Mammary epithelial cell (primary cell): ENCODE measurements at regions of chr2 and their contacts with region 1.

Region 1: DNA sequence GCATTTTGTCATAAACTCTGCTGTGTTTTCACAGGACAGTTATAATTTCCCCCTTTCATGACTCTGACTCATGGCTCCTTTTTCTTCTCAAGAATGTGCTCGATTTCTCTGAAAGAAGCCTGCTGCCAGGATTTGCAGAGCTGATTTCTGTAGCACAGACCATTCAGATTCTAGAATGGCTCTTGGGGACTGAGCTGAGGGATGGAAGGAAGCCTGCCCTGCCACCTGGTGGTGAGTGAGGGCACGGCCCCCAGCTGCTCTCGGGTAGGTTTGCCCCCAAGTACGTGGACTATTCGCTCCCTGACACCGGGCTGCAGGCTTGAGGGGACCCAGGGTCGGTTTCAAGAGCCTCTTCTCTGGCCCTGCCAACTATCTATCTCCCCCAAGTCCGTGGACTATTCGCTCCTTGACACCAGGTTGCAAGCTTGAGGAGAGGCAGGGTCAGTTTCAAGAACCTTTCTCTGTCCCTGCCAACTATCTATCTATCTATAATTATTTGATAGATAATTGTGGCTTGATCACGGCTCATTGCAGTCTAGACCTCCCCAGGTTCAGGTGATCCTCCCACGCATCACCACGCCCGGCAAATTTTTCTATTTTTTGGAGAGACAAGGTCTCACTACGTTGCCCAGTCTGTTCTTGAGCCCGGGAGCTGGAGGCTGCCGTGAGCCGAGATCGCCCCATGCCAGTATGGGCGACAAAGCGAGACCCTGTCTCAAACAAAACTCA is 1.4 kb upstream of the SMYD5 start:
- DNase-seq: peak; percentile 44
- H3K4me3 ChIP-seq: no peak overlapping the region
- H3K27ac ChIP-seq: no peak overlapping the region
- H3K4me1 ChIP-seq: peaks cover 13% of the 10 kb centered on the region
- H3K27me3 ChIP-seq: no peaks in the 10 kb centered on the region
- CTCF ChIP-seq: peak; percentile 93 to 94

Region 2: DNA sequence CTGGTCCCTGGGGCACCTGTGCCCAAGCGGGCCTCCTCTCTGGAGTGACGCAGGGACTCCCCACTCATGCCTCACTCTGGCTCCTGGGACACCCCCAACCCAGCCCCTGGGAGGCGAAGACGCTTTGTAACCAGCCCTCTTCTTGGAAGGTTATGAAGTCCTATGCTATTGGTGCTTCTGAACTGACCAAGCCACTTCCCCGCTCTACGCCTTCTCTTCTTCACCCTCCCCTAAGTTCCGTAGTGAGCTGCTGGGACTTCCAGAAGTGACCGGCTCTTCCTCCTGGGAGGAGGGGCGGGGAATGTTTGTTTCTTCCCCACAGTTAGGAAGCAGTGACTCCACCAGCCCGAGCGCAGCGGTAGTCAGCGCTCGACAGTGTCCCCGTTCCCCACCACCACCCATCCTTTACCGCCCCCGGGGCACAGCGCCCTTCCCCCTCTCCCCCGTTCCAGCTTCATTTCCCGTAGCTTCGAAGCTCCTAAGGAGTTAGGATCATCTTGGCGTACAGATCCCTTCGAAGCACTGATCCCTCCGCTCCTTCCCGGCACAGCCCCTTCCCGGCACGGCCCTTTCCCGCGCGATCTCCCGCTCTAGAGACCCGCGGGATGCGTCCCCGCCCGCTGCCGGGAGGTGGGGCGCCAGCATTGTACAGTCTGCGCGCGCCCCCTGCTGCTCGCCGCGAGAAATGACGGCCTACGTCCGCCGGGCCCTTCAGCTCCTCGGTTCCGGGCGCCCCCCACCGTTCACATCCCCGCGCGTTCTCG is 35.5 kb before region 1 on chr2:
- CTCF ChIA-PET with region 1: interaction called, 46 read pairs
- dilution Hi-C with region 1: no loop called
- in situ Hi-C with region 1: no loop called
- intact Hi-C with region 1: loop called (anchors 1 kb)
- DNase-seq: peak; percentile 64
- H3K4me3 ChIP-seq: peak overlapping the region; percentile 55 to 59 (median 55)
- H3K27ac ChIP-seq: no peak overlapping the region
- H3K4me1 ChIP-seq: peaks cover 27% of the 10 kb centered on the region
- H3K27me3 ChIP-seq: peaks cover 13% of the 10 kb centered on the region
- CTCF ChIP-seq: peak; percentile 64 to 93

Region 3: DNA sequence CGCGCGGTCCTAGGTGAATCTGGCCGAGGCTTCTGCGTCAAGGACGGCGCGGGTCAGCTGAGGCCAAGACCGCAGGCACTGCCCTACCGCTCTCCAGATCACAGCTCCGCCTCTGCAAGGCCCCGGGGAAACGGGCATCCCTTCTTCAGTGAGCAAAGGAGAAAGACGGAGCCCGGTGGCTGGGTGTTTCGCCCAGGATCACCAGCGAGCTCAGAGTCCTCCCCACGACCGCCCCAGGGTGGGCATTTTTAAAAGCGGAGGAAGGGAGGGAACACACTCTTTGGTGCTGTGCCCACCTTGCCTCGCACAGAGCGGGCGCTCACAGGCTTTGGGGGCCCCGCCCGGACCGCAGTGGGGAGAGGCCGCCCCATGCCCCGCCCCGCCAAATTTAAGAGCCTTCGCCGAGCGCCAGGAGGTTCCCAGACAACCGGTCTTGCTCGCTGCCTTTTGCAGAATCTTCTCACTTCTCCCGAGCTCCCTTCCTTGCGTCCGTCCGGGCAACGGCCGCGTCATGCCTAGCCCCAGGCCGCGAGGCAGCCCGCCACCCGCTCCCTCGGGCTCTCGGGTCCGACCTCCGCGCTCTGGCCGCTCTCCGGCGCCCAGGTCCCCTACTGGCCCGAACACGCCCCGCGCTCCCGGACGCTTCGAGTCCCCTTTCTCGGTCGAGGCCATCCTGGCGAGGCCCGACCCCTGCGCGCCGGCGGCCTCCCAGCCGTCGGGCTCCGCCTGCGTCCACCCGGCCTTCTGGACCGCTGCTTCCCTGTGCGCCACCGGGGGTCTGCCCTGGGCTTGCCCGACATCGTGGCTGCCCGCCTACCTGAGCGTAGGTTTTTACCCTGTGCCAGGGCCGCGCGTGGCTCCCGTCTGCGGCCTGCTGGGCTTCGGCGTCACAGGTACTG is 10.2 kb before region 1 on chr2 and contains the start of gene NOTO:
- CTCF ChIA-PET with region 1: no interaction called
- dilution Hi-C with region 1: no loop called
- in situ Hi-C with region 1: no loop called
- intact Hi-C with region 1: loop called (anchors 1 kb)
- DNase-seq: peak; percentile 12
- H3K4me3 ChIP-seq: peak within 1 kb of the TSS; percentile 15 to 27 (median 26)
- H3K27ac ChIP-seq: no peak within 1 kb of the TSS
- H3K4me1 ChIP-seq: peaks cover 13% of the 10 kb centered on the region
- H3K27me3 ChIP-seq: peaks cover 17% of the 10 kb centered on the region
- CTCF ChIP-seq: no peak
- total RNA-seq, gene NOTO: not detected

Region 4: GRCh38 chr2:73260034-73260984 is 47.7 kb after region 1 on chr2:
- CTCF ChIA-PET with region 1: no interaction called
- dilution Hi-C with region 1: no loop called
- in situ Hi-C with region 1: no loop called
- intact Hi-C with region 1: loop called (anchors 1 kb)
- DNase-seq: peak; percentile 39
- H3K4me3 ChIP-seq: no peak overlapping the region
- H3K27ac ChIP-seq: no peak overlapping the region
- H3K4me1 ChIP-seq: peaks cover 7% of the 10 kb centered on the region
- H3K27me3 ChIP-seq: no peaks in the 10 kb centered on the region
- CTCF ChIP-seq: peak; percentile 45 to 70

Region 5: GRCh38 chr2:73297151-73297559 is 84.5 kb after region 1 on chr2:
- CTCF ChIA-PET with region 1: no interaction called
- dilution Hi-C with region 1: no loop called
- in situ Hi-C with region 1: no loop called
- intact Hi-C with region 1: no loop called
- DNase-seq: no peak
- H3K4me3 ChIP-seq: no peak overlapping the region
- H3K27ac ChIP-seq: no peak overlapping the region
- H3K4me1 ChIP-seq: peaks cover 13% of the 10 kb centered on the region
- H3K27me3 ChIP-seq: peaks cover 15% of the 10 kb centered on the region
- CTCF ChIP-seq: no peak